OCI-LY7 (cell line): ENCODE measurements at regions of chr11 and their contacts with region 1.

Region 1: GRCh38 chr11:67665541-67666362 is 8.7 kb downstream of the ALDH3B2 start:
- DNase-seq: peak; percentile 35
- H3K4me3 ChIP-seq: no peak overlapping the region
- H3K27ac ChIP-seq: no peak overlapping the region
- H3K4me1 ChIP-seq: peaks cover 47% of the 10 kb centered on the region
- CTCF ChIP-seq: peak; percentile 60

Region 2: GRCh38 chr11:67691149-67691548 is 25.4 kb after region 1 on chr11:
- CTCF ChIA-PET with region 1: interaction called, 13 read pairs
- POLR2A ChIA-PET with region 1: interaction called, 5 read pairs
- intact Hi-C with region 1: loop called (anchors 1 kb)
- DNase-seq: peak; percentile 63
- H3K4me3 ChIP-seq: no peak overlapping the region
- H3K27ac ChIP-seq: no peak overlapping the region
- H3K4me1 ChIP-seq: peaks cover 19% of the 10 kb centered on the region
- CTCF ChIP-seq: peak; percentile 92

Region 3: DNA sequence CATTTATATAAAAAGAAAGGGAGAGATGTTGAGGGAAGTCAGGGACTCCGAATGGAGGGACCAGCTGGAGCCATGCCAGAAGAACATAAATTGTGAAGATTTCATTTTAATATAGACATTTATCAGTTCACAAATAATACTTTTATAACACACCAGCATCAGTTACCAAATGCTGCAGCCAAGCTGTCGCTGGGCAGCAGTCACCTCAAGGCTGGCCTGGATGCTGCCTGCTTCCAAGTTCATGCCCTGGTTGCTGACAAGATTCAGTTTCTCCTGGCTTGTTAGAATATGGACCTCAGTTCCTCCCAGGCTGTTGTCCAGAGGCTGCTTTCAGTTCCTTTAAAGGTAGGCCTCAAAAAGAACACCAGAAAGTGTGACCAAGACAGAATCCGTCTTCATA is 39.5 kb after region 1 on chr11:
- CTCF ChIA-PET with region 1: no interaction called
- POLR2A ChIA-PET with region 1: no interaction called
- intact Hi-C with region 1: loop called (anchors 5 kb)
- DNase-seq: no peak
- H3K4me3 ChIP-seq: no peak overlapping the region
- H3K27ac ChIP-seq: no peak overlapping the region
- H3K4me1 ChIP-seq: no peaks in the 10 kb centered on the region
- CTCF ChIP-seq: no peak